Lower leg skin (tissue), 4 donors: ENCODE measurements at regions of chr17 and their contacts with region 1.

Region 1: DNA sequence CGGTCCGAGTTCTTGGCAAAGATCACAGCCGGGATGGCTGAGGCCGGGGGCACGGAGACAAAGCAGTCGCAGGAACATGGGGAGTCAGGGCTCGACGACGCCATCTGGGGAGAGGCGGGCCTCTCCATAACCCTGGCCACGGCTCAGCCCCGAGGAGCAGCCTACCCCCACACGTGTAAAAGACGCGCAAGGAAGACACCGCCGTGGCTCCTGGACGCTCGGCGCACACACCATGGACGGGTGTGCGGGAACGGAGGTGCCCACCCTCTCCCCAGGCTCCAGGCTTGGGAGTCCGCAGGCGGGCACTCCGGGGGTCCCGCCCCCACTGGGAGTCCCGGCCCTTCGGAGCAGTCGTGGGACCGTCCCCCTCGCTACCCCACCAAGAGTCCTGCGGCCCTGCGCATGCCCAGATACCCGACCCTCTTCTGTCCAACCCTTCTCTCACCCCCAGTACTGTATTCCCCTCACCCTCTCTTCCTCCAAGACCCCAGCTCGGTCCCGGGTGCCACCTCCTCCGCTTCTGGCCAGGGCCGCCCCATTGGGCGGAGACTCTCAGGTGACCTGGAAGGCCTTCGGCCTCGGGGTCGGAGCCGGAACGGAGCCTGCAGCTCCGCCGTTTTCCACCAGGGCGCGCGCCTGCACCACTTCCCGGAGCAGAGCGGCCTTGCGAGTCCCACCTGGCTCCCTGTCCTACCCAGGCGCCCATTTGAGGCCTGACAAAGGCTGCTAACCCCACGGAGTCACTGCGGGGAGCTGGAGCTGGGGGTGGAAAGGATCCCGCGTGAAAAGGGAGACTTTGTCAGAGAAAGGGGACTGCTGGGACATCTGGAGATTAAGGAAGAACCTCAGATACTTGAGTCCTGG is at the start of gene SCRN2:
- DNase-seq: peak; percentile 87 to 98
- H3K4me3 ChIP-seq: peak within 1 kb of the TSS; percentile 63
- CTCF ChIP-seq: peak in 1 of 3 donors; percentile 98
- POLR2A ChIP-seq: no peak
- total RNA-seq, gene SCRN2: 23.1 to 37.9 (median 28.3) TPM

Region 2: DNA sequence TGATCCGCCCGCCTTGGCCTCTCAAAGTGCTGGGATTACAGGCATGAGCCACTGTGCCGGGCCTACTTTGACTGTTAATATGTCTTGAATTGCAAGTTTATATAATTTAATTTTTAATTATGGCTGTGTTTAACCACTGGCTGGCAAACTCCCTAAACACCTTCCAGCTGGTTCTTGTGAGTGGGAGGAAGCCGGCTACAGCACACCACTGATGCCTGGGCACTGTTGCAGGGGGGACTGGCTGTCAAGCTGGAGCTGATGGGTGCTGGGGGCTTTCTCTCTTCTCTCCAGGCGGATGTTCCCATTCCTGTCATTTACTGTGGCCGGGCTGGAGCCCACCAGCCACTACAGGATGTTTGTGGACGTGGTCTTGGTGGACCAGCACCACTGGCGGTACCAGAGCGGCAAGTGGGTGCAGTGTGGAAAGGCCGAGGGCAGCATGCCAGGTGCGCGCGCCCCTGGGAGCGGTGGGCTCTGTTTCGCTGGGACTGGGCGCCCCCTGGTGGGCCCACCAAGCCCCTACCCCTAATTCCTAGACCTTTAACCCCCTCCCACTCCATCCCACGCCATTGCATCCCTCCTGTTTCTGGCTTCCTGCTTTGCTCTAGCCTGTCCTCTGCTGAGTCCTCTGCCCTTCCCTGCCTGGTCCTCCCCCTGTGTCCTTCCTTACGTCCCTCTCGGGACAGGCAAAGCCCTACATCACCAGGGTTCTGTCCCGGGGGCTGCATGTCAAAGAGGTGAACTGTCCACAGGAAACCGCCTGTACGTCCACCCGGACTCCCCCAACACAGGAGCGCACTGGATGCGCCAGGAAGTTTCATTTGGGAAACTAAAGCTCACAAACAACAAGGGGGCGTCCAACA is 98.4 kb before region 1 on chr17:
- intact Hi-C with region 1: no loop called
- DNase-seq: no peak
- H3K4me3 ChIP-seq: no peak overlapping the region
- CTCF ChIP-seq: no peak
- POLR2A ChIP-seq: no peak

Region 3: DNA sequence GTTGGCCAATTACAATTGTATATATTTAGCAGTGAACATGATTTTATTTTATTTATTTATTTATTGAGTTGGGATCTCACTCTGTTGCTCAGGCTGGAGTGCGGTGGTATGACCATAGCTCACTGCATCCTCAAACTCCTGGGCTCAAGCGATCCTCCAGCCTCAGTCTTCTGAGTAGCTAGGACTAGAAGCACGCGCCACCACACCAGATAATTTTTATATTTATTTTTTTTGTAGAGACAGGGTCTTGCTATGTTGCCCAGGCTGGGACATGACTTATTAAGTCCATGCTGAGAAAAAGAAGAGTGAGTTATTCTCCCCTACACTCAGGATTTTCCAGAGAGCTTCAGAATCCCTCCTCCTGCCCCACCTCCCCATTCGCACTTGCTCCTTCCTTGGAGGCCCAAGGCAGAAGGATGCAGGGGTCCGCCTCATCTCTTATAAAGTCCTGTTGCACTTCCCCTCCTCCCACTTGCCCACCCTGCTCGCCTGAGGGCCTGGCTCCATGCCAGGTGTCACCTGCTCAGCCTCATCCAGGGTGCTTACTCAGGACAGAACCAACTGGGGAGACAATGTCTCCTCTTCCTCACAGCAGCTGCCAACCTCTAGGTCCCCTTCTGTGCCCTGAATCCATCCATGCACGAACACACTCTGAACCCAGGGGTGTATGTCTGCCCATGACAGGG is 38.9 kb after region 1 on chr17:
- intact Hi-C with region 1: loop called (anchors 2 kb)
- DNase-seq: no peak
- H3K4me3 ChIP-seq: no peak overlapping the region
- CTCF ChIP-seq: no peak
- POLR2A ChIP-seq: no peak

Region 4: DNA sequence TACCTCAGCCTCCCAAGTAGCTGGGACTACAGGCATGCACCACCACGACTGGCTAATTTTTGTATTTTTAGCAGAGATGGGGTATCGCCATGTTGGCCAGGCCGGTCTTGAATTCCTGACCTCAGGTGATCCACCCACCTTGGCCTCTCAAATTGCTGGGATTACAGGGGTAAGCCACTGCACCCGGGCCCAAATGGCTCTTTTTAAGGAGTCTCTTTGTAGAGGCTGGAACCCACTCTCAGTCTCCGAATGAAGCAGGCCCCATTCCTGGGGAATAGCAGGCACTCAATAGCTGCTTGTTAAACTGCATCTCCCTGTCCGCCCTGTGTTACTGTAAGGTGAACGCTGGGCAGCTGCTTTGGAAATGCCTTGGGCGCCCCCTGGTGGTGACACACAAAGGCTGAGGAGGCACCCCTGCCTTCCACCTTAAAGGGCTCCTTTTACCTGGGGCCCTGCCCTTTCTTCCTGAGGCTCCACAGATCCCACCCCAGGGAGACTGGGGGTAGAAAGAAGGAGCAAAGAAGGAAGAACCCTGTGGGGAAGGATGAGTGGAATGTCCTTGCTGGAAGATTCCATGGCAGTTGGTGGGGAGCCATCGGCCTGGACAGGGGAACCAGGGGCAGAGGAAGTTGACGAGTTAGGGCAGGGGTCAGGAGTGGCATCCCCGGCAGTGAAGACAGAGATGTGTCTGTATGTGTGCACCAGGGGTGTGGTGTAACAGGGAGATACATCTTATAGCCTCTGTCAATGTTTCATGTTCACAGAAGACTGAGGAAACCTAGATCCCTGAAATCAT is 49.0 kb after region 1 on chr17:
- intact Hi-C with region 1: loop called (anchors 2 kb)
- DNase-seq: peak; percentile 84 to 98
- H3K4me3 ChIP-seq: no peak overlapping the region
- CTCF ChIP-seq: peak in 1 of 3 donors; percentile 70
- POLR2A ChIP-seq: no peak

Region 5: DNA sequence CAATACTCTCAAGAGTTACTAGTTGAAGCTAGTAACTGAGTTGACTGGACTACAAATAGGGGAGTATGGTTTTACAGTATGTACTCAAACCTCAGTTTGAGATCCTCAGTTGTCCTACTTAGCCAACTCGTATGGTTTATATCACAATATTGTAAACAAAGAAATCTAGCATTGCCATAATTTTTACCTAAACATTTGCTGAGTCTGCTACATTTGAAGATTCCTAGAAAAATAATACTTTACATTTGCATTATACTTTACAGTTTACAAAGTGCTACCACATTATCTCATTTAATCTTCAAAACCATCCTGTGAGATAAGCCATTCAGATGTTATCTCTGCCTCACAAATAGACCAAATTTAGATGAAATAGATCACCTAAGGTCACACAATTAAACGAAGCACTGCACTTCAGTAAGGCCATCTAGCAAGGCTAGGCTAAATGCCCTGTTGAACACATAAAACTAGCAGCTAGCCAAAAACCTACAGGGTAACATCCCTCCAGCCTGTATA is 244.0 kb after region 1 on chr17:
- intact Hi-C with region 1: no loop called
- DNase-seq: no peak
- H3K4me3 ChIP-seq: no peak overlapping the region
- CTCF ChIP-seq: no peak
- POLR2A ChIP-seq: no peak